Dendritic cell treated with granulocyte-macrophage colony-stimulating factor and Interleukin-4, amounts not matched to agents 40 ng/mL and 50 ng/mL, for 4 days (primary cell): ENCODE measurements at regions of chr2 and their contacts with region 1.

Region 1: DNA sequence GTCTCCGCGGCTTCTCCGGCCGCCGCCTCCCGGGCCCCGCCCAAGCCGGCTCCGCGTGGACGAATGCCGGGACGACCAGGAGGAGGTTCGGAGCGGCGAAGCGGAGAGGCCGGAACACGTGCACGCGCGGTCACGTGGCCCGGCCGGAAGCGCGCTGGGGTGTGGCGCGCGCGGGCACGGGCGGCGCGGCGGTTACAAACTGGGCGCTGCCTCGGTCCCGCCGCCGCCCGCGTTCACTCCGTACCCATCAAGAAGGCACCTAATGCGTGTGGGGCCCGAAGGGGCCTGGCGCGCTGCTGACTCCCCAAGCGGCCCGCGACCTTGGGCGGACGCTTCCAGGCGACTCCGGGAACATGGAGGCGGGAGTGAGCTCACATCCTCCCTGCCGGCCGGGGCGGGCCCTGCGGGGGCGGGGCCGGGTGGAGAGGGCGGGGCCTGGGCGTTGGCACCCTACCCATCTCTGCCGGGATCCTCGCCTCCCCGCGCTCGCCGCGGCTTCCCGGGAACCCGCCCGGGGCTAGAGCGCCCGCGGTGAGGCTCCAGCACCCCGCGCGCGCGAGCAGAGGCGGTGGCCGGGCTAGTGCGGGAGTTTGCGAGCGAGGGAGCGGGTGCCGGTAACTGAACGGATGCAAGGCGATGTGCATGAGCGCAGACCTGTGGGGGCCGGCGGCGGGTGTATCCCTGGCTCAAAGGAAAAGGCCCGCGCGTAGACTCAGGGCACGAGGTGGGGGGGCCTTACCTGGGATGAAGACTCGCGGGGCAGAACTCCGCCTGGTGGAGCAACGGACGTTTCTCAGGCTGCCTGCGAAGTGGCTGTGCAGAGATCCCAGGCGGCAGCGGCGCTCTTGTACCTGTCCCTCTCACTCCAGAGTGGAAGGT is at the start of gene TMEM185B:
- H3K4me3 Mint-ChIP-seq: peak within 1 kb of the TSS; percentile 81
- H3K27ac Mint-ChIP-seq: peak within 1 kb of the TSS; percentile 89
- H3K4me1 Mint-ChIP-seq: peaks cover 47% of the 10 kb centered on the region
- H3K27me3 Mint-ChIP-seq: peaks cover 38% of the 10 kb centered on the region

Region 2: DNA sequence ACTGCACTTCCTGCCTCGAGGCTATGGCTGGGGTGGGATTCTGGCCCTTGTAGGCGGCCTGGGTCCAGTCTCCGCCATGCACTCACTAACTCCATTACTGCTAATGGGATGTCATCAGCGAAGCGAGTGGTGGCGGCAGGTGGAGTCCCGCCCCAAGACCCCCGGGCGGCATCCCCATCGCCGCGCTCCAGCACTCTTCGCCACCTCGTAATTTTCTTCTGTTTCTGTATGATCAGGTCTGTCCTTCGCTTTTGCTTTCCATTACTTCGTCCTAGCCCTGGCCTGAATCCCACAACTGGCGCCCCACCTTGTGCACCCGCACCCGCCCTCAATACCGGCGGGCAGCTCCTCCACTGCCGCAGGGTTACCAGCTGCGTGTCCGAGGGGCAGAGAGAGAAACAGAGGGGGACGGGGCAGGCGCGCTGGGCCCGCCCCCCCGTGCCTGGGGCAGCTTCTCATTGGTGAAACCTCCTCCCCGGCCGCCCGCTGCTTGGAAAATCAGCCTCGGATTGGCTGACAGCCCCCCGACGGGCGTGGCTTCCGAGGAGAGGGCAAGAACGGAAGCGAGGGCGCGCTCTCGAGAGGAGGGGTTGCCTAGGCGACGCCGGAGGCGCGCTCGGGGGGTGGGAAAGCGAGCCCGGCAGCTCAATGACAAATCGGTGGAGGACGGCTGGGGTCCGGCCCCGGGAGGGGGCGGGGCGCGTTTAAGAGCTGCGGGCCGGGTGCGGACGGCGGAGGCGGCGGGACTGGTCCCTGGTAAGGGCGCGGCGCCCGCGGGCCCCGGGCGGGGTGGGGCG is 29.1 kb after region 1 on chr2 and contains the start of gene RALB:
- intact Hi-C with region 1: loop called (anchors 2 kb)
- H3K4me3 Mint-ChIP-seq: peak within 1 kb of the TSS; percentile 100
- H3K27ac Mint-ChIP-seq: peak within 1 kb of the TSS; percentile 95
- H3K4me1 Mint-ChIP-seq: peaks cover 50% of the 10 kb centered on the region
- H3K27me3 Mint-ChIP-seq: peaks cover 21% of the 10 kb centered on the region

Region 3: DNA sequence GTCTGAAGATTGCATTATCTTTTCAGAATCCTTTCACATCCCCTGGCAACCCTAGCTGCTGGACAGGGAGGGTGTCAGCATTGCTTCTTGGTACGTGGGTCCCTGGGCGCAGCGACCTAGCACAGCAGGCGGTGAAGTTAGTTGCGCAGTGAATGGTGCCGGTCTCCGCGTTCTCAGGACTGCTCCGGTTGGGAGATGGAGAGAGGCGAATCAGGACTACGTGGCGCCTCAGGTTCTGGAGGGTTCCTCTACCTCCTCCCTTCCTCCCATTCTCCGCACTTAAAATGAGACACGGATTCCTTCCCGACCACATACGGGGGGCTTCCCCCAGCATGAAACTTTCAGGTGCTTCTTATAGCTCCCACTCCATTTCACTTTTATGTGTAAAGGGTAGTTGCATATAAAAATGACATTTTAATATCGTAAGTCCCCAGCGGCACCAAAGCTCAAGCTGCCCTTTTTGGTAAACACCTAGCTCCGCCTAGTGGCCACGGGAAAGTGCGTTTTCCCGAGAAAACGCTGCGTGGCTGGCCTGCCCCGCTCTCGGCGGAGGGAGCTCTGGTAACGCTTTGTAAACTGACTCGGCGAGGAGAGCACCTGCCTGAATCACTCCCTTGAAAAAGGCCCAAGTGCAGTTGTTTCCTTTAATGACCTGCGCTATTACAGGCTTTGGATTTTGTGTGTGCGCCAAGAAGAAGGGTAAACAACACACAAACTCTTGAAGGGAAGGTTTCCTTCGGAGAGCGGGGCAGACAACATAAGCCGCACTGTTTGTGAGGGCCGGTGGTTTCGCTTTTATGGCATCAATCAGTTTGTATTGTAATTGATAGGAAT is 89.8 kb after region 1 on chr2:
- intact Hi-C with region 1: loop called (anchors 5 kb)
- H3K4me3 Mint-ChIP-seq: peak overlapping the region; percentile 50
- H3K27ac Mint-ChIP-seq: no peak overlapping the region
- H3K4me1 Mint-ChIP-seq: peaks cover 11% of the 10 kb centered on the region
- H3K27me3 Mint-ChIP-seq: peaks cover 42% of the 10 kb centered on the region